ENCODE measurements at regions of chr1 and their contacts with region 1.

Region 1: GRCh38 chr1:22542886-22543285 is 20.4 kb upstream of the EPHA8 start:
- DNase-seq: no peak
- H3K27ac ChIP-seq: no peak overlapping the region
- CTCF ChIP-seq: no peak

Region 2: GRCh38 chr1:22484706-22485345 is 58.1 kb before region 1 on chr1:
- CTCF ChIA-PET with region 1: no interaction called
- POLR2A ChIA-PET with region 1: no interaction called
- DNase-seq: no peak
- H3K27ac ChIP-seq: no peak overlapping the region
- CTCF ChIP-seq: no peak

Region 3: DNA sequence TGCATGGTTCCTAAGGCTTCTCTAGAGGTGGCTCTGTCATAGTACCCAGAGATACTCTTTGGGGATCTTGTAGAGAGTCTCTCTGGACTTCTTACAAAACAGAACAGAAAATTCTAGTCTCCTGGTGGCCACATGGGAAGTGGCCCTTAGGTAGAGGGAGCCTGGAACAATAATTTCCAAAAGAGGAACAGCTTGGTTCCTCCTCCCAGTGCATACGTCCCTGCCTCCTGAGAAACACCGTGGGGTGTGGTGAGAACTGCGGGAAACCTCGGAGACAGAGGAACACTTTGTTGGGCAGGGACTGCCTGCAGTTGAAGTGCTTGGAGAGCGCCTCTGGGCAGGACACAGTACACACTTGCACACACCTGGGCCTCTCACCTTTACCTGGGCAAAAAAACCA is 18.4 kb before region 1 on chr1:
- CTCF ChIA-PET with region 1: no interaction called
- POLR2A ChIA-PET with region 1: no interaction called
- DNase-seq: no peak
- H3K27ac ChIP-seq: no peak overlapping the region
- CTCF ChIP-seq: no peak

Region 4: DNA sequence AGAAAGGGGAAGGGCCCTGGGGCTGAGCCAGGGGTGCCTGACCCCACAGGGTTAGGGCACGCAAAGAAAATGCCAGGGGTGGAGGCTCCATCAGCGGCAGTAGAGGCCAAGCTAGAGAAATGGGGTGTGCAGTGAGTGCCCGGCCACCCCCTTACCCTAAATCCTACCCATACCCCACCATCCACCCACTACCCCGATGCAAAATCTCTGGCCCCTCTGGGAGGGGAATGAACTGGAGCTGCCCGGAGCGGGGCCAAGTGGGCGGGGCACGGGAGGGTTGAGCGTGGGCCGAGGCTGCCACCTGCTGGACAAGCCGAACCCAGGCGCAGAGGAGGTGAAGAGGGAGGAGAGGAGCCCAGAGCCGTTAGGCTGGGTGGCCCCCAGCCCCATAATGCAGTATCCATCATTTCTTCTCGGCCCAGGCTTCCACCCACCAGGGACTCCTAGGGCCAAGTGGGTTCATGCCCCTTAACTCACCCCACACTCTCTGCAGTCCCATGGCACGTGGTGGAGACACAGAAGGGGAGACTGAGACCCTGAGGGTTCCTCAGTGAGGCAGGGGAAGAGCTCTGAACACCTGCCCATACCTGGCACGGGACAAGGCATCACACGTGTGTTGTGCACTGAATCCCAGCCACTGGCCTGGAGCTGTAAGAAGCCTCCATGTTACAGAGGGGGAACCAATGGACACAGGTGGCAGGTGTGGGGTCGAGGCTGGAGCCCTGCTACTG is 99.2 kb after region 1 on chr1:
- CTCF ChIA-PET with region 1: interaction called, 10 read pairs
- POLR2A ChIA-PET with region 1: no interaction called
- DNase-seq: peak; percentile 78
- H3K27ac ChIP-seq: no peak overlapping the region
- CTCF ChIP-seq: peak; percentile 91

Measured in RWPE1 (cell line).